ENCODE measurements at regions of chr9 and their contacts with region 1.

Region 1: GRCh38 chr9:78806492-78807160 is 509.7 kb downstream of the PSAT1 start:
- H3K4me3 Mint-ChIP-seq: no peak overlapping the region
- H3K27ac Mint-ChIP-seq: no peak overlapping the region
- H3K4me1 Mint-ChIP-seq: no peaks in the 10 kb centered on the region
- H3K27me3 Mint-ChIP-seq: no peaks in the 10 kb centered on the region

Region 2: DNA sequence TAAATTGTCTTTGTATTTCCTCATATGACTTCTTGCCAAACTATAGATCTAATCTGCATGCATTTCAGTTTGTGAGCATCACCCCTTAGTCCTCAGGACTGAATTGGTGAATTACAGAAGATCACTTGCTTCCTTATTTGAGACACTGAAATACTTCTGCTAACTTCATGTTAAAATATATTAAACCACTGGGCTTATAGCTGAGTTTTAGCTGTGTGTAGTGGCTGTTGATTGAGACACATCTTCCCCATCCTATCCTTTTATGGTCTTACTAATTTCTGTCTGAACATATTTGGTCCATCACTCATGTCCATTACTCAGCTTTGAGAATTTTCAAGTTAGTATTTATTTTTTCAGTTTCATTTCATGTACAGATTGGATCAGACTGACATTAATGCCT is 213.8 kb before region 1 on chr9:
- intact Hi-C with region 1: loop called (anchors 10 kb)
- H3K4me3 Mint-ChIP-seq: no peak overlapping the region
- H3K27ac Mint-ChIP-seq: no peak overlapping the region
- H3K4me1 Mint-ChIP-seq: no peaks in the 10 kb centered on the region
- H3K27me3 Mint-ChIP-seq: no peaks in the 10 kb centered on the region

Measured in dendritic cell treated with granulocyte-macrophage colony-stimulating factor and Interleukin-4, amounts not matched to agents 40 ng/mL and 50 ng/mL, for 4 days (primary cell).